Calu3 (cell line): ENCODE measurements at regions of chr11 and their contacts with region 1.

Region 1: DNA sequence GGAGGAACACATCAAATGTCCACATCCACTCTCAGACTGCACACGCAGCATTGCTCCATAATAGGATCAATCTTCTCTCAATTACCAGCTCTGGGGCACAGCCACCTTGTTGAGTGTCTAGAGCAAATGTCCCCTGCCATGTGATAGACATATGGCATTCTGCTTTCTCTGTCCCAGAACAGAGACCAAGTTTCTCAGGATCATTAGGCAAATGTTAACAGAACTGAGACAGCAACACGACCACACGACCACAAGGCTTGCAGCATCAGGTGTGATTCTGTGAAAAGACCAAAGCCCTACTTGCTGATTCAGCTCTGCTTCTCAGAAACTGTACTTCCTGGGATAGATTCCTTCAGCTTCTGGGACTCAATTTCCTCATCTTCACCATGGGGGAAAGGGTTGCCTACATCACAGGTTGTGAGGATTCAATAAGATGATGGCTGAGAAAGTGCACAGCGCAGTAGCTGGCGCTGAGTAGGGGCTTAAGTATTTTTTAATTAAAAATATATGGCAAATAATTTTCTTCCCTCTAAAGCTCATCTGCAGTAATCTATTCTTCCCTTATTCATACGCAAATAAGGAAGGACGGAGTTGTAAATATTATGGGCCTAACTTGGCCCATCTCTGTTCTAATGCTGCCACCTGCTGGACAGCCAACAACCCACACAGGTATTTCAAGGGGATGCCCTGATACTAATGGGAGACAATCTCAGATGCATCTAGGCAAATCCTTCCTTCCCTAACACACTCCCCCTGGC is 54.3 kb upstream of the USP47 start:
- DNase-seq: peak; percentile 75
- H3K4me3 Mint-ChIP-seq: no peak overlapping the region
- H3K27ac Mint-ChIP-seq: no peak overlapping the region
- H3K4me1 Mint-ChIP-seq: peaks cover 16% of the 10 kb centered on the region
- H3K27me3 Mint-ChIP-seq: peaks cover 18% of the 10 kb centered on the region
- CTCF ChIP-seq: peak; percentile 79

Region 2: GRCh38 chr11:10792398-10792975 is 995.0 kb before region 1 on chr11:
- CTCF ChIA-PET with region 1: no interaction called
- intact Hi-C with region 1: loop called (anchors 5 kb)
- DNase-seq: peak; percentile 96
- H3K4me3 Mint-ChIP-seq: peak overlapping the region; percentile 12
- H3K27ac Mint-ChIP-seq: no peak overlapping the region
- H3K4me1 Mint-ChIP-seq: peaks cover 34% of the 10 kb centered on the region
- H3K27me3 Mint-ChIP-seq: no peaks in the 10 kb centered on the region
- CTCF ChIP-seq: peak; percentile 89

Region 3: GRCh38 chr11:11028017-11028692 is 759.3 kb before region 1 on chr11:
- CTCF ChIA-PET with region 1: interaction called, 56 read pairs
- intact Hi-C with region 1: loop called (anchors 1 kb)
- DNase-seq: peak; percentile 87
- H3K4me3 Mint-ChIP-seq: no peak overlapping the region
- H3K27ac Mint-ChIP-seq: no peak overlapping the region
- H3K4me1 Mint-ChIP-seq: no peaks in the 10 kb centered on the region
- H3K27me3 Mint-ChIP-seq: peaks cover 43% of the 10 kb centered on the region
- CTCF ChIP-seq: peak; percentile 66

Region 4: GRCh38 chr11:11265994-11266606 is 521.4 kb before region 1 on chr11:
- CTCF ChIA-PET with region 1: no interaction called
- intact Hi-C with region 1: loop called (anchors 5 kb)
- DNase-seq: peak; percentile 75
- H3K4me3 Mint-ChIP-seq: no peak overlapping the region
- H3K27ac Mint-ChIP-seq: no peak overlapping the region
- H3K4me1 Mint-ChIP-seq: peaks cover 24% of the 10 kb centered on the region
- H3K27me3 Mint-ChIP-seq: peaks cover 13% of the 10 kb centered on the region
- CTCF ChIP-seq: peak; percentile 81

Region 5: DNA sequence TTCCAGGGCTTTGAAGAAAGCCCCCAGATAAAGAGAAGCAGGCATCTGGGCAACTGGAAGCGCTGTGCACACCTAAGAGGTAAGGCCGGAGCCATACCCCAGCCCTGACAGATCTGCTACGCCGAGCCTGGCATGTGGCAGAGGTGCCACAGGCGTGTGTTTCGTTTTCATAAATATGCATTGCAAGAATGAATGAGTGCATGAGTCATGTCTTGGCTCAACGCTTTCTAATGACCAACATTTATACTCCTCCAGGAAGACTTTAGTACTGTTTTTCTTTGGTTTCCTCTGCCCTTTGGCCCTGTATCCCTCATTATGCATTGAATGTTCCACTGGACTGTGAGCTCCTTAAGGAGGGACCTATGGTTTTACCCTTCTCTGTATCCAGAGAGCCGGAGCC is 395.7 kb before region 1 on chr11:
- CTCF ChIA-PET with region 1: no interaction called
- intact Hi-C with region 1: loop called (anchors 5 kb)
- DNase-seq: peak; percentile 60
- H3K4me3 Mint-ChIP-seq: no peak overlapping the region
- H3K27ac Mint-ChIP-seq: peak overlapping the region; percentile 10
- H3K4me1 Mint-ChIP-seq: peaks cover 48% of the 10 kb centered on the region
- H3K27me3 Mint-ChIP-seq: no peaks in the 10 kb centered on the region
- CTCF ChIP-seq: no peak

Region 6: GRCh38 chr11:11848891-11849746 is 61.6 kb after region 1 on chr11:
- CTCF ChIA-PET with region 1: interaction called, 3 read pairs
- intact Hi-C with region 1: loop called (anchors 2 kb)
- DNase-seq: peak; percentile 77
- H3K4me3 Mint-ChIP-seq: no peak overlapping the region
- H3K27ac Mint-ChIP-seq: no peak overlapping the region
- H3K4me1 Mint-ChIP-seq: peaks cover 27% of the 10 kb centered on the region
- H3K27me3 Mint-ChIP-seq: no peaks in the 10 kb centered on the region
- CTCF ChIP-seq: peak; percentile 60